AG04450 (cell line): ENCODE measurements at regions of chr17 and their contacts with region 1.

Region 1: DNA sequence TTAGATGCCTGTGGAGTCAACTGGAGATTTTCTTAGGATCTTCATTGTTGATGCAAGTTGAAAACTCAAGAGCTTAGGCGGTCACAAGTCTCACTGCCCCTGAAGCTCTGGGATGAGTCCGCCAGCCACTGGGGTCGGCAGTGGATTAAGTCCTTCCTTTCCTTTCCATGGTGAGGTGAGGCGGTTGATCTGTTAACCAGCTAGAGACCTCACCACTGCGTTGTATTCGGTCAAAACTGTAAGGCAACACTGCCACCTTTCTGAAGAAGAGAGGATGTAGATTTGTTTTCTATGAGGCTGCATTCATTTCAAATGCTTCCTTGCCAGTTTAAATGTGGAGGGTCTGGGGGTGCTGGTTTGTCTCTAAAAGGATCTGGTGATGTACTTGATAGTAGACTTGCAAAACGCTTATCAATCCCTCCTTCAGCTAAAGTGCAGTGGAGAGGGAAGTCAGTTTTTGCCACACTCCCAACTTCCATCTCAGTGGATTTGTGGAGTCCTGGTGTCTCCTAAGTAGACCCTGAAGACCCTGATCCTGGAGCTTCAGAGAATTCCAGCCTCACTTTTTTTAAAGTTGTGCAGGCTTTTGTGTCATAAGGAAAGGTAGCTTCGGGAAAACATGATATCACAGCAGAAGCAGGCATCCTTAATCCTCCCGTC is 1.7 kb downstream of the MYOCD start:
- DNase-seq: peak; percentile 70
- H3K4me3 ChIP-seq: peak overlapping the region; percentile 77
- H3K27ac ChIP-seq: peak overlapping the region; percentile 25
- H3K27me3 ChIP-seq: no peaks in the 10 kb centered on the region
- CTCF ChIP-seq: peak; percentile 75

Region 2: DNA sequence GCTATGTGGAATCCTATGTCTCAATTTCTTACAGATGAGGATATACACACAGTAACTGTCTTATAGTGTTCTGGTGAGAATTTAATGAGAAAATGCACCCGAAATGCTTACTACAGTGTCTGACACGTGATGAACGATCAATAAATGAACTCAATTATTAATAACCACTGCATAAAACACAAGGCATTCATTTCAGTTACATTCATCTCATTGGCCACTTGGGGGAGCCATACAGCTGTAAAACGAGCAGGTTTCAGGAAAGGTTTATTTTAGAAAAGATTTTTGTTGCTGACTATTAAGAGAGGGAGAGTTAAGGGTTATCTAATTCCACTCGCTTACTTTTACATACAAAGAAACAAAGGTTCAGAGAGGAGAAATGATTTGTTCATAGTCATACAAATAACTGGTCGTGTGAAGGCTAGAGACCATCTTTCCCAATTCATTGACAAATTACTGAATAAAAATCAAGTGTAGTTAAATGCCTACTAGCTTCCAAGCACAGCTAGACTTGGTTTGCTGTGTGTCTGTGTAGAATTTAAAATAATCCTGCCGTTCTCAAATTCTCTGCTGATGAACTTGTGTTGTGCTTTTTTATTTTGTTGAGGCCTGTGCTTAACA is 486.7 kb before region 1 on chr17:
- CTCF ChIA-PET with region 1: interaction called, 42 read pairs
- POLR2A ChIA-PET with region 1: no interaction called
- DNase-seq: peak; percentile 53
- H3K4me3 ChIP-seq: no peak overlapping the region
- H3K27ac ChIP-seq: no peak overlapping the region
- H3K27me3 ChIP-seq: no peaks in the 10 kb centered on the region
- CTCF ChIP-seq: peak; percentile 72

Region 3: GRCh38 chr17:12247761-12248160 is 419.7 kb before region 1 on chr17:
- CTCF ChIA-PET with region 1: interaction called, 166 read pairs
- POLR2A ChIA-PET with region 1: no interaction called
- DNase-seq: no peak
- H3K4me3 ChIP-seq: no peak overlapping the region
- H3K27ac ChIP-seq: no peak overlapping the region
- H3K27me3 ChIP-seq: no peaks in the 10 kb centered on the region
- CTCF ChIP-seq: no peak

Region 4: DNA sequence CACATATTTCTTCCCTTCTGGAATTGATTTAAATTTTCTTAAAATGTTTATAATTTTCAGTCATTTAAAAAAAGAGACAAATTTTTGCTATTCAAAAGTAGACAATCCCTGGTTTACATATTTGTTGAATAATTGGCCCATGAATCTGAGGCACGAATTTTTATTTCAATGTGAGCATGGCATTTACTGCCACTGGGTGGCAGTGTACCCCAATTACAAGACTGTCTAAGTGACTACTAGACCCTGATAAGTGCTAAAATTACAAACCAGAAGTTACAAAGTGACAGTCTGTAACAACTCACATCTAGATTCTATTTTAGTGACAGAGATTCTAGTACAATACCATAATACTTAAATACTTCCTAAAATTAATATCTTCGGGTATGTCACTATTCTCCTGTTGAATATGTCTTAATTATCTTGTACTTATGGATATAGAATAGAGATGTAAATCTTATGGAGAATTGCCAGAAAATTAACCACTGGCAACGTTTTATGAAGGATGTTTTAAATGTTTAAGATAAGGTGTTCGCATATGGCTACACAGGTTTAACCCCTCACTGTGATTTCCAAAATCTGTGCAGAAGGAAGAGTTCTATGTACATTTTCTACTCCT is 410.9 kb before region 1 on chr17:
- CTCF ChIA-PET with region 1: interaction called, 166 read pairs
- POLR2A ChIA-PET with region 1: no interaction called
- DNase-seq: peak; percentile 56
- H3K4me3 ChIP-seq: no peak overlapping the region
- H3K27ac ChIP-seq: no peak overlapping the region
- H3K27me3 ChIP-seq: no peaks in the 10 kb centered on the region
- CTCF ChIP-seq: peak; percentile 79

Region 5: GRCh38 chr17:12620200-12620720 is 47.2 kb before region 1 on chr17:
- CTCF ChIA-PET with region 1: interaction called, 12 read pairs
- POLR2A ChIA-PET with region 1: interaction called, 4 read pairs
- DNase-seq: no peak
- H3K4me3 ChIP-seq: no peak overlapping the region
- H3K27ac ChIP-seq: peak overlapping the region; percentile 78
- H3K27me3 ChIP-seq: no peaks in the 10 kb centered on the region
- CTCF ChIP-seq: no peak

Region 6: DNA sequence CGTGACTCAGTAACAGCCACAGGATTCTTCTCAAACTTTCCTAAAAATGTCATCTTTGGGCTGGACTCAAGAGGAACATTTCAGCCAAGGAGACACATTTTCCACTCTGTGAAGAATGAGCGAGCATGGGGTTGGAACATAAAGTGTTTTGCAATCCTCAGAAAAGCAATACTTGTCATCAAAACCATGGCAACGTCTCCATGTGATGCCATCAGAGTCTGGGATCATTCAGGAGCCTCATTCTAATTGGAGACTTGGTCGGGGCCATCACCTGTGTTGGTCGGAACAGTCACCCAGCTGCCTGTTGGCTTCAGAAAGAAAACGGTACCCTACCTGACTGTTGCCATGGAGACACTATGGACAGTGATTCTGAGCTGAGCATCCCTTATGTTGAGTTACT is 23.8 kb after region 1 on chr17:
- CTCF ChIA-PET with region 1: no interaction called
- POLR2A ChIA-PET with region 1: no interaction called
- DNase-seq: no peak
- H3K4me3 ChIP-seq: no peak overlapping the region
- H3K27ac ChIP-seq: no peak overlapping the region
- H3K27me3 ChIP-seq: no peaks in the 10 kb centered on the region
- CTCF ChIP-seq: no peak

Region 7: GRCh38 chr17:12737743-12738469 is 70.5 kb after region 1 on chr17:
- CTCF ChIA-PET with region 1: interaction called, 40 read pairs
- POLR2A ChIA-PET with region 1: interaction called, 4 read pairs
- DNase-seq: no peak
- H3K4me3 ChIP-seq: no peak overlapping the region
- H3K27ac ChIP-seq: no peak overlapping the region
- H3K27me3 ChIP-seq: no peaks in the 10 kb centered on the region
- CTCF ChIP-seq: no peak

Region 8: GRCh38 chr17:13002766-13003451 is 335.5 kb after region 1 on chr17:
- CTCF ChIA-PET with region 1: interaction called, 18 read pairs
- POLR2A ChIA-PET with region 1: no interaction called
- DNase-seq: peak; percentile 55
- H3K4me3 ChIP-seq: no peak overlapping the region
- H3K27ac ChIP-seq: no peak overlapping the region
- H3K27me3 ChIP-seq: no peaks in the 10 kb centered on the region
- CTCF ChIP-seq: peak; percentile 80

Region 9: GRCh38 chr17:13222949-13223348 is 555.5 kb after region 1 on chr17:
- CTCF ChIA-PET with region 1: no interaction called
- POLR2A ChIA-PET with region 1: no interaction called
- DNase-seq: no peak
- H3K4me3 ChIP-seq: no peak overlapping the region
- H3K27ac ChIP-seq: no peak overlapping the region
- H3K27me3 ChIP-seq: no peaks in the 10 kb centered on the region
- CTCF ChIP-seq: no peak